ENCODE measurements at regions of chr6 and their contacts with region 1.

Region 1: GRCh38 chr6:156564127-156564806 is 212.9 kb upstream of the ARID1B start:
- DNase-seq: peak; percentile 69 to 97
- H3K4me3 ChIP-seq: no peak overlapping the region
- CTCF ChIP-seq: peak in 1 of 3 donors; percentile 78
- POLR2A ChIP-seq: no peak

Region 2: GRCh38 chr6:156582509-156582992 is 18.3 kb after region 1 on chr6:
- intact Hi-C with region 1: no loop called
- DNase-seq: no peak
- H3K4me3 ChIP-seq: no peak overlapping the region
- CTCF ChIP-seq: no peak
- POLR2A ChIP-seq: no peak

Region 3: GRCh38 chr6:157184202-157185020 is 620.1 kb after region 1 on chr6:
- intact Hi-C with region 1: loop called (anchors 10 kb)
- DNase-seq: peak; percentile 64 to 94
- H3K4me3 ChIP-seq: no peak overlapping the region
- CTCF ChIP-seq: peak in 1 of 3 donors; percentile 37
- POLR2A ChIP-seq: no peak